Natural killer cell (primary cell): ENCODE measurements at regions of chr20 and their contacts with region 1.

Region 1: GRCh38 chr20:17431621-17432364 is 99.4 kb downstream of the BFSP1 start:
- DNase-seq: peak; percentile 31 to 71
- ATAC-seq: peak in 1 of 3 donors; percentile 63
- H3K4me3 ChIP-seq: no peak overlapping the region
- H3K4me3 Mint-ChIP-seq: no peak overlapping the region
- H3K27ac ChIP-seq: no peak overlapping the region
- H3K27ac Mint-ChIP-seq: no peak overlapping the region
- H3K4me1 ChIP-seq: no peaks in the 10 kb centered on the region
- H3K4me1 Mint-ChIP-seq: no peaks in the 10 kb centered on the region
- H3K27me3 ChIP-seq: peaks cover 4% of the 10 kb centered on the region
- H3K27me3 Mint-ChIP-seq: peaks cover 14 to 30% of the 10 kb centered on the region in 2 donors
- CTCF ChIP-seq: peak; percentile 95

Region 2: DNA sequence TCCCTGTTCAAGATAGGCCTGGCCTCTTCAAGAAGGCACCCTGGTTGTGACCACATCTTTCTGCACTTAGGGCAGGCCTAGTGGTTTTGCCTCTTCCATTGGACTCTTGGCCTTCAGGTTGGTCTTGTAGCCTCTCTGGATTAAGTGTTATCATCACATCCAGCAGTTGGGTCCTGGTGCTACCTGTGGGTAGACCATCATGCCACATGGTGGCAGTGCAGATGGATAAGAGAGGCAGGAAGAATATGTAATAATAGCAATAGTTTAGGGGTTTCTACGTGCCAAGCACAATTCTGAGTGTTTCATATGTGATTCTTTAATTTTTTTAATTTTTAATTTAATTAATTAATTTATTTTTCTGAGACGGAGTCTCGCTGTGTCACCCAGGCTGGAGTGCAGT is 730.5 kb before region 1 on chr20:
- intact Hi-C with region 1: loop called (anchors 5 kb)
- DNase-seq: peak in 1 of 2 donors; percentile 66
- ATAC-seq: peak in 2 of 3 donors; percentile 62 to 69
- H3K4me3 ChIP-seq: no peak overlapping the region
- H3K4me3 Mint-ChIP-seq: no peak overlapping the region
- H3K27ac ChIP-seq: no peak overlapping the region
- H3K27ac Mint-ChIP-seq: no peak overlapping the region
- H3K4me1 ChIP-seq: no peaks in the 10 kb centered on the region
- H3K4me1 Mint-ChIP-seq: no peaks in the 10 kb centered on the region
- H3K27me3 ChIP-seq: no peaks in the 10 kb centered on the region
- H3K27me3 Mint-ChIP-seq: peaks cover 22 to 48% of the 10 kb centered on the region in 2 donors
- CTCF ChIP-seq: peak; percentile 18